Pancreas (tissue), 10 donors: ENCODE measurements at regions of chr10 and their contacts with region 1.

Region 1: GRCh38 chr10:28532383-28533175 is at the start of gene WAC:
- DNase-seq: peak; percentile 95 to 99 (median 96)
- ATAC-seq: peak; percentile 92 to 97 (median 92)
- H3K4me3 ChIP-seq: peak within 1 kb of the TSS; percentile 59 to 96 (median 82)
- H3K27ac ChIP-seq: peak within 1 kb of the TSS; percentile 95 to 99 (median 96)
- H3K4me1 ChIP-seq: peaks cover 7 to 30% (median 13%) of the 10 kb centered on the region in 3 donors
- H3K27me3 ChIP-seq: no peaks in the 10 kb centered on the region
- CTCF ChIP-seq: no peak
- total RNA-seq, gene WAC: 41.6 to 70.5 (median 45.9) TPM

Region 2: GRCh38 chr10:28432210-28432676 is 100.3 kb before region 1 on chr10:
- intact Hi-C with region 1: loop called in 1 of 3 experiments (anchors 10 kb)
- DNase-seq: peak in 5 of 6 donors; percentile 49 to 62 (median 55)
- ATAC-seq: peak; percentile 94 to 99 (median 98)
- H3K4me3 ChIP-seq: no peak overlapping the region
- H3K27ac ChIP-seq: no peak overlapping the region
- H3K4me1 ChIP-seq: peaks cover 0 to 3% (median 0%) of the 10 kb centered on the region in 3 donors
- H3K27me3 ChIP-seq: no peaks in the 10 kb centered on the region
- CTCF ChIP-seq: peak; percentile 36 to 75 (median 68)

Region 3: DNA sequence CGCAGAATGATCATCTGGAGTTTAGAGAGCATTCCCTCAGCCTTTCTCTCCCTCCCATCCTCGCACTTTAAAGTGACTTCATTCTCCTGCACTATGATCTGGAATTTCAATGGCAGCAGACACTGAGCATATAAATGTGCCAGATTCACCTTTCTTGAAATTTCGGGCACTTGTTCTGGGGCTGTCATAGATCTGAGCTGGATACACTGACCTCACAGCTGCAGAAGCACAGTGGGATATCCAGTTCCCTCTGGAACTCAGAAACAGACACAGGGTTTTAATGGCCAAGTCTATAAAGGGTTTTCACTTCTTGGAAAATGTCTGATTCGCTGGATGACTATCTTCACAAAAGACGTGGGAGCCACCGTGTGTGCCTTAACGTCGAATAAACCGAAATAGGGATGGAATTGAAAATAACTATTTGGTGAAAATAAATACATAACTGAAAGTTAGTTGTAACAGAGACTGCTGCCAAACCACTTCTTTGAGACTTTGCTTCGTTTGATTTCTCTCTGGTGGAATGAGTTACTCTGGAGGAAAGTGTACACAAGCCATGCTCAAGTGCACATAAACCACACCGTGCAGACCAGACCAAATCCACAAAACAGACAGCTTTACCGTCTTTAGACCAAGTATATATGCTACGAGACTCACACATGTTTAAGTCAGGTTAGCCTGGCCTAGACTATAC is 976.1 kb after region 1 on chr10:
- intact Hi-C with region 1: no loop called
- DNase-seq: no peak
- ATAC-seq: no peak
- H3K4me3 ChIP-seq: no peak overlapping the region
- H3K27ac ChIP-seq: no peak overlapping the region
- H3K4me1 ChIP-seq: peaks cover 0 to under 1% (median 0%) of the 10 kb centered on the region in 3 donors
- H3K27me3 ChIP-seq: no peaks in the 10 kb centered on the region
- CTCF ChIP-seq: no peak